ENCODE measurements at regions of chr3 and their contacts with region 1.

Region 1: DNA sequence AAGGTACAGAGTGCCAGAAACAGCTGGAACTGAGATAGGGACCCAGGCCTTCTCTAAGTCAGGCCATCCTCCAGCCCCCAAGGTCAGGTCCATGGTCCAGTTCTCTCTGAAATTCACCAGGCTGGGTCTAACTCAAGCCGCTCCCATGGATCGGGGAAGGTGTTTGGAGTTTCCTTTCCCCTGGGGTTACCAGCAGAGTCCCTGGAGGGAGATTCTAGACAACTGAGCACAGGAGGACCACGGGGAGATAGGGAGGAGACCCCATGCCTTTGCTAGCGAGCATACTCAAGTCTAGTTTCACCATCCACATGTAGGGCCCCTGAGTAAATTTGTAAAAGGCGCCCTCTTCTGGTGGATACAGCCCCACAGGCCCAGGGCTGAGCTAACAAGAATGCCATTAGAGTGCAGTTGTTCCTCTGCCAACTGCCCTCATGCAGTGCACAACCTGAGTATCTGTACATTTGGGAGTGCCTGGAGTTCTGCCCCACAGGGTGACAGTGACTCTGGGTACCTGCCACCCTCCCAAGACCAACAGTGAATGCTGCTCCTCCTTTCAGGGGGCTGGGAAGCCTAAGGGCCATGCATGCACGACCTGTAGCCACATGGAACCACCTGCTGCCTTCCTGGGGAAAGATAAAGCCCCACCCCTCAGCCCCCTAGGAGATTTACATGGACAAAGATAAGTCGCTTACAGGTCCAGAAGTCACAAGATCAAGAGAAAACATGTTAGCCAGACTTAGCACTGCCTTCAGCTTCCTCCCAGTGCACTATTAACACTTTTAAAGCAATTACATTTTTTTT is 89.0 kb downstream of the IQSEC1 start:
- DNase-seq: peak in 1 of 3 donors; percentile 83
- ATAC-seq: peak; percentile 94 to 97 (median 95)
- H3K4me3 ChIP-seq: no peak overlapping the region
- H3K27ac ChIP-seq: no peak overlapping the region
- H3K4me1 ChIP-seq: peaks cover 0 to 10% (median 0%) of the 10 kb centered on the region in 4 donors
- H3K27me3 ChIP-seq: no peaks in the 10 kb centered on the region
- CTCF ChIP-seq: peak; percentile 80 to 89 (median 84)
- POLR2A ChIP-seq: no peak

Region 2: DNA sequence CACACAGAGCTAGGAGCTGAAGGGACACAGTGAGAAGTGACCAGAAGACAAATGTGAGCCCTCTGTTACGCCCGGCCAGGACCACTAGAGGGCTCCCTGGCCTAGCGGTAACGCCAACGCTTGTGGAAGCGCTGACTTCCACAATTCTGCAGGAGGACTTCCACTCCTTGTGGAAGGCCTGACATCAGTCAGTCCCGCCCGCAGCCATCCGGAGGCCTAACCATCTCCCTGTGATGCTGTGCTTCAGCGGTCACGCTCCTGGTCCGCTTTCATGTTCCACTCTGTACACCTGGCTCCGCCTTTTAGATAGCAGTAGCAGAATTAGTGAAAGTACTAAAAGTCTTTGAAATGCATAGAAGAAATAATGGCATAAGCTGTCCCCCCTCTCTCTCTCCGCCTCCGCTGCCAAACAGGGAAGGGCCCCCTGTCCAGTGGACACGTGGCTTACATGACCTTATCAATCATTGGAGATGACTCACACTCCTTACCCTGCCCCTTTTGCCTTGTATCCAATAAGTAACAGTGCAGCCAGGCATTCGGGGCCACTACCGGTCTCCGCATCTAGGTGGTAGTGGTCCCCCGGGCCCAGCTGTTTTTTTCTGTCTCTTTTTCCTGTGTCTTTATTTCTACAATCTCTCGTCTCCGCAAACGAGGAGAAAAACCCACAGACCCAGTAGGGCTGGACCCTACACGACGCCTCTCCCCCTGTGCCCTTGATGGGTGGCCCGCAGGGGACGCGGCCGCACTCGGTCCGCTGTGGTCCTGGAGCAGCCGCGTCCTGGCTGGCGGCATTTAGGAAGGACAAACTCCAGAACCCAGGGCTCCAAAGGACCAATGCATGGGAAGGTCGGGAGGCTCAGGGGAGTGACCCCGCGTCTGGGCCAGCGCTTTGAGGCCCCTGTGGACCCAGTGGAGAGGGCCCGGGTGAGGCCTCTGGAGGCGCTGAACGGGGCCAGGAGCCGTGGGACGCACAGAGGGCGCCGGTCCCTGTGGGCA is 115.9 kb before region 1 on chr3:
- intact Hi-C with region 1: loop called in 1 of 2 experiments (anchors 5 kb)
- DNase-seq: peak; percentile 69 to 87 (median 86)
- ATAC-seq: peak; percentile 96 to 100 (median 96)
- H3K4me3 ChIP-seq: no peak overlapping the region
- H3K27ac ChIP-seq: no peak overlapping the region
- H3K4me1 ChIP-seq: peaks cover 0 to 12% (median 2%) of the 10 kb centered on the region in 4 donors
- H3K27me3 ChIP-seq: no peaks in the 10 kb centered on the region
- CTCF ChIP-seq: peak; percentile 76 to 97 (median 91)
- POLR2A ChIP-seq: no peak

Region 3: GRCh38 chr3:12901623-12902045 is 82.6 kb before region 1 on chr3:
- intact Hi-C with region 1: loop called in 1 of 2 experiments (anchors 10 kb)
- DNase-seq: peak in 2 of 3 donors; percentile 15 to 29
- ATAC-seq: no peak
- H3K4me3 ChIP-seq: no peak overlapping the region
- H3K27ac ChIP-seq: no peak overlapping the region
- H3K4me1 ChIP-seq: no peaks in the 10 kb centered on the region
- H3K27me3 ChIP-seq: no peaks in the 10 kb centered on the region
- CTCF ChIP-seq: no peak
- POLR2A ChIP-seq: no peak

Region 4: GRCh38 chr3:12916159-12916558 is 68.1 kb before region 1 on chr3:
- intact Hi-C with region 1: loop called in 1 of 2 experiments (anchors 10 kb)
- DNase-seq: no peak
- ATAC-seq: peak in 3 of 4 donors; percentile 8 to 51 (median 34)
- H3K4me3 ChIP-seq: no peak overlapping the region
- H3K27ac ChIP-seq: no peak overlapping the region
- H3K4me1 ChIP-seq: no peaks in the 10 kb centered on the region
- H3K27me3 ChIP-seq: no peaks in the 10 kb centered on the region
- CTCF ChIP-seq: no peak
- POLR2A ChIP-seq: no peak